ENCODE measurements at regions of chr6 and their contacts with region 1.

Region 1: DNA sequence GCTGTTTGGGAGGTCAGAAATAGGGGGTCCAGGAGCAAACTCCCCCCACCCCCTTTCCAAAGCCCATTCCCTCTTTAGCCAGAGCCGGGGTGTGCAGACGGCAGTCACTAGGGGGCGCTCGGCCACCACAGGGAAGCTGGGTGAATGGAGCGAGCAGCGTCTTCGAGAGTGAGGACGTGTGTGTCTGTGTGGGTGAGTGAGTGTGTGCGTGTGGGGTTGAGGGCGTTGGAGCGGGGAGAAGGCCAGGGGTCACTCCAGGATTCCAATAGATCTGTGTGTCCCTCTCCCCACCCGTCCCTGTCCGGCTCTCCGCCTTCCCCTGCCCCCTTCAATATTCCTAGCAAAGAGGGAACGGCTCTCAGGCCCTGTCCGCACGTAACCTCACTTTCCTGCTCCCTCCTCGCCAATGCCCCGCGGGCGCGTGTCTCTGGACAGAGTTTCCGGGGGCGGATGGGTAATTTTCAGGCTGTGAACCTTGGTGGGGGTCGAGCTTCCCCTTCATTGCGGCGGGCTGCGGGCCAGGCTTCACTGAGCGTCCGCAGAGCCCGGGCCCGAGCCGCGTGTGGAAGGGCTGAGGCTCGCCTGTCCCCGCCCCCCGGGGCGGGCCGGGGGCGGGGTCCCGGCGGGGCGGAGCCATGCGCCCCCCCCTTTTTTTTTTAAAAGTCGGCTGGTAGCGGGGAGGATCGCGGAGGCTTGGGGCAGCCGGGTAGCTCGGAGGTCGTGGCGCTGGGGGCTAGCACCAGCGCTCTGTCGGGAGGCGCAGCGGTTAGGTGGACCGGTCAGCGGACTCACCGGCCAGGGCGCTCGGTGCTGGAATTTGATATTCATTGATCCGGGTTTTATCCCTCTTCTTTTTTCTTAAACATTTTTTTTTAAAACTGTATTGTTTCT is at the start of gene VEGFA:
- DNase-seq: peak; percentile 68
- ATAC-seq: peak; percentile 63
- H3K4me3 ChIP-seq: peak within 1 kb of the TSS; percentile 93
- H3K27ac ChIP-seq: peak within 1 kb of the TSS; percentile 95
- H3K4me1 ChIP-seq: peaks cover 25 to 37% of the 10 kb centered on the region in 2 experiments
- H3K27me3 ChIP-seq: no peaks in the 10 kb centered on the region
- CTCF ChIP-seq: peak in 2 of 3 experiments; percentile 97; a peak in 4 of 6 replicates
- POLR2A ChIP-seq: peak; percentile 98
- RAD21 ChIP-seq: no peak
- total RNA-seq, gene VEGFA: 112 TPM

Region 2: DNA sequence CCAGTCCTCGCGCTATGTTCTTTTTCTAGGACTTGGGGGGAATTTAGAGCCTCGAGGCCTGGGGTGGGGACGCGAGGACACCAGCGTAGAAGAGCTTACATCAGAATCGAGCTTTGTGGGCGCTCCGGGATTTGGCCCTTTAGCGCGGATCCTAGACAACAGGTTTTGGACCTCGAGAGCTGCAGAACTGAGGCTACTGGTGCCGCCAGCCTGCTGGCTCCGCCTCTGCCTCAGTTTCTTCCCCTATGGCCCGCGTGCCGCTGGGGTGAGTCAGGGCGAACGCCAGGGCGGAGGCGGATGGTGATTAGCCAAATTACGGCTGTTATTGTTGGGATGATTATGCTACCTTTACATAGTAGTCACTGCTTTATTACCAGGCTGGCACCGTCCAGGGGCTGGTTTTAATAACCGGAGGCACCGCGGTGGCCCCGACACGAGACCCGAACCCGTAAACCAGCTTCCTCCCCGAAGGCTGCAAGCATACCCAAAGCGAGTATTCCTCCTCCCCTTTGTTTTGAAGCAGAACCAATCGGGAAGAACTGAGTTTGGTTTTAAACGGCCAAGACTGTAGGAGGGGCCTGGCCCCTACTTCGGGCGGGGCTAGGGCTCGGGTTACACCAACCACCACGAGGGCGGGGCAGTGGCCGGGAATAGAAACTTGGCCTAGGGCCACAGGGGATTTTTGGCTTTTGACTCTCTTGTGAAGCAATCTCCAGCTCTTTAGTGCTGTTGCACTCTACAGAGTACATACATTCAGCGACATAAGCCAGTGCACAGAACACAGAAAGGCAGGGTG is 140.1 kb before region 1 on chr6:
- CTCF ChIA-PET with region 1: interaction called, 4 read pairs
- POLR2A ChIA-PET with region 1: interaction called, 7 read pairs
- RAD21 ChIA-PET with region 1: no interaction called
- intact Hi-C with region 1: loop called (anchors 5 kb)
- DNase-seq: peak; percentile 95
- ATAC-seq: peak; percentile 80
- H3K4me3 ChIP-seq: peak overlapping the region; percentile 80 to 100
- H3K27ac ChIP-seq: peak overlapping the region; percentile 86
- H3K4me1 ChIP-seq: peaks cover 20 to 39% of the 10 kb centered on the region in 2 experiments
- H3K27me3 ChIP-seq: no peaks in the 10 kb centered on the region
- CTCF ChIP-seq: no peak
- POLR2A ChIP-seq: peak; percentile 80
- RAD21 ChIP-seq: no peak

Region 3: GRCh38 chr6:43758617-43759050 is 11.1 kb before region 1 on chr6:
- CTCF ChIA-PET with region 1: interaction called, 12 read pairs
- POLR2A ChIA-PET with region 1: interaction called, 10 read pairs
- RAD21 ChIA-PET with region 1: no interaction called
- intact Hi-C with region 1: no loop called
- DNase-seq: no peak
- ATAC-seq: peak; percentile 89
- H3K4me3 ChIP-seq: no peak overlapping the region
- H3K27ac ChIP-seq: no peak overlapping the region
- H3K4me1 ChIP-seq: peaks cover 0 to 7% of the 10 kb centered on the region in 2 experiments; a peak in 1 of 4 replicates
- H3K27me3 ChIP-seq: no peaks in the 10 kb centered on the region; the same call in 1 of the 2 replicates
- CTCF ChIP-seq: peak; percentile 71 to 95 (median 87); a peak in 5 of 6 replicates
- POLR2A ChIP-seq: no peak
- RAD21 ChIP-seq: peak; percentile 78

Region 4: DNA sequence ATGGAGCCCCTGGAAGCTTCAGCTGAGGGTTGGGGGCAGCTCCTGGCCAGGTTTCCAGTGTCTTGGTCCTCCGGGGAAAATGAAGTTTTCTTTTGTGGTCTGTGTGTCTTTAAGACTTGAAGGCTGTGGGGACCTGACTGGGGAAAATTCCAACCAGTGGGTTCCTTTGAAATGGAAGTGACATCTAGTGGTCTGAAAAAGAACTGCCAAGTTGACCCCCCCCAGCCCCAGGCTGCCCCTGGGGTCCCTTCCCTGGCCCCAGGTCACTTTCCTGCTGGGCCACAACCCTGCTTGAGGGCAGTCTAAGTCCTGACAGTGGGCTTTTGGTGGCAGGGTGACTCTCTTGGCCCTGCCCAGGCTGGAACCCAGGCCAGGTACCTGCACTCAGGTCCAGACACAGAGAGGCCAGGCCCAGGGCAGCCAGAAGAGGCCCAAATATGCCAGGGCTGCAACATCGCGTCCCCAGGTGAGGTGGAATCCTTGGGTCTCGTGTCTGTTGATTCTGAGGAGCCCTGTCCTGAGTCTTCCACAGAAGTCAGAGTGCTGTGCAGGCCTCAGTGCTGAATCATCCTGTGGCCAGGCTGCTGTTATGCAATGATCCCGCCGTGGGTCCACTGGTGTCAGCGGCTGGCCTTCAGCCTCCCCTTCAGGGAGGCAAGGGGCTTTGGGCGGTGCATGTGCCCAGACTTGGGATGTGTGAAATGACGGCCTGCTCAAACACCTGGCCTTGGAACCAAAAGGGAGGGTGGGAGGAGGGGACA is 68.7 kb after region 1 on chr6:
- CTCF ChIA-PET with region 1: no interaction called
- POLR2A ChIA-PET with region 1: interaction called, 3 read pairs
- RAD21 ChIA-PET with region 1: no interaction called
- intact Hi-C with region 1: loop called (anchors 5 kb)
- DNase-seq: peak; percentile 22
- ATAC-seq: peak; percentile 88
- H3K4me3 ChIP-seq: no peak overlapping the region
- H3K27ac ChIP-seq: no peak overlapping the region; the same call in 1 of the 2 replicates
- H3K4me1 ChIP-seq: peaks cover 8 to 19% of the 10 kb centered on the region in 2 experiments
- H3K27me3 ChIP-seq: no peaks in the 10 kb centered on the region
- CTCF ChIP-seq: peak; percentile 42 to 59 (median 45); a peak in 5 of 6 replicates
- POLR2A ChIP-seq: no peak
- RAD21 ChIP-seq: peak; percentile 65

Region 5: GRCh38 chr6:43887340-43887858 is 117.6 kb after region 1 on chr6:
- CTCF ChIA-PET with region 1: no interaction called
- POLR2A ChIA-PET with region 1: no interaction called
- RAD21 ChIA-PET with region 1: no interaction called
- intact Hi-C with region 1: no loop called
- DNase-seq: no peak
- ATAC-seq: peak; percentile 33; the same call in 1 of the 2 replicates
- H3K4me3 ChIP-seq: no peak overlapping the region
- H3K27ac ChIP-seq: no peak overlapping the region
- H3K4me1 ChIP-seq: no peaks in the 10 kb centered on the region; a peak in 1 of 4 replicates
- H3K27me3 ChIP-seq: no peaks in the 10 kb centered on the region
- CTCF ChIP-seq: no peak
- POLR2A ChIP-seq: no peak
- RAD21 ChIP-seq: no peak

Region 6: DNA sequence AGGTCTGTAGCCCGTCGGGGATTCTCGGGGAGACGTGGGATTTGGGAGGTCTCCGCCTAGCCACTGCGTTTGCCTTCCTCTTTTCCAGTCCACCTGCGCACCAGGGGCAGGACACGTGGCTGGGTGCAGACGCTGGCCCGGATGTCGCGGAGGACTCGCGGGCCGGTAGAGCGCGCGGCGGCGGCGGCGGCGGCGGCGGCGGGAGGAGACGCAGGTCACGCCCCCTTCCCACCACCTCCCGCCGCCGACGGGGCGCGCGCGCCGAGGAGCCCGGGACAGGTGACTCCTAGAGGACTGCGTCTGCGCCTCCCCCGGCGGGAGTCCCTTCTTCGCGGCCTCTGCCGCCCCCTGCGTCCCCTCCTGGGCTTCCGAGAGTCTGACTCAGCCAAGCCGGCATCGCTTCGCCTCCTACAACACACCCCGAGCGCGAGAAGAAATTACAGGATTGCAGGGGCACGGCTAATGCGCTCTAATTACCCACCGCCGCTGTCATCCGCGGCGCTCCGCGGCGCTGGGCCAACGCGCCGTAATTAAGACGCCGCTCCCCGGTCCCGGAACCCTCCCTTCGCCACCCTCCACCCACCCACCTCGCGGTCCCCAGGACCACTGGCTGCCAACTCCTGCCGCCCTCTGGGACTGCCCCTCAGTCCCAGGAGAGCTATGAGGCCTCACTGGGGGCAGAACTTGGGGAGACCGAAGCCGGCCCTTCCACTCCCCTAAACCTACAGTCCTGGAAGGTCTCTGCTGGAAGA is 233.0 kb after region 1 on chr6:
- CTCF ChIA-PET with region 1: interaction called, 6 read pairs
- POLR2A ChIA-PET with region 1: interaction called, 13 read pairs
- RAD21 ChIA-PET with region 1: no interaction called
- intact Hi-C with region 1: loop called (anchors 1 kb)
- DNase-seq: no peak
- ATAC-seq: peak; percentile 40
- H3K4me3 ChIP-seq: peak overlapping the region; percentile 58 to 64
- H3K27ac ChIP-seq: peak overlapping the region; percentile 89
- H3K4me1 ChIP-seq: peaks cover 35 to 66% of the 10 kb centered on the region in 2 experiments
- H3K27me3 ChIP-seq: no peaks in the 10 kb centered on the region
- CTCF ChIP-seq: 0 out of 6 replicates have a peak, but pooled peaks of 1 of the 3 experiments have one; percentile 9
- POLR2A ChIP-seq: no peak
- RAD21 ChIP-seq: no peak